ENCODE measurements at regions of chr17 and their contacts with region 1.

Region 1: DNA sequence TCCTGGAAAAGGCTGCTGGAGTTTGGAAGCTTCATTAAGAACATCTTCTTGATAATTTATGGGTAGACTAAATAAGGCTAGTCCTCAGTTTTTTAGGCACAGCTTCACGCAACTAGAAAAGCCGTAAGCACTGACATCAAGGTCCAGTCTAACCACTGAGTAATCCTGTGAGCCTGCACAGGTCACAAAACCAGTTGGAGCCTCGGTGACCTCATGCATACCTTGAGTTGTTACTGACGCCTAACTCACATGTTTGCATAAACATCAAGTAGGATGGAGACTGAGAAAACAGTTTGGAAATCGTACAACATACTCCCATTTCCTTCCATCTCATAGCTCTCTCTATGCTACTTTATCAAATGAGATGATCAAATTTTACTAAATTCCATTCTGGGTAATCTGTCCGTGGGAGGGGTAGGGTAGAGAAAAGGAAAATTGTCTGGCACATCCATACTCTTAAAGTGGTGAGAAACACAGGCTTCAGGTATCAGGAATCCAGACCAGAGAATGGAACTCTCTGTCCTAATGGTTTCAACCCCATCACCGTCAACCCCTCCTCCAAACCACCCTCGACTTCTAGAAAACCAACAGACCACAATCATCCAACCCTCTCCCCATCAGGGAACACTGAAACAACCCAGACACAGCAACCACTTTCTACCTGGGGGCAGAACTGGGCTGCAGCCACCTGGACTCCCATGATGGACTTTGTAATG is 64.0 kb upstream of the RCVRN start:
- DNase-seq: no peak
- ATAC-seq: no peak
- H3K4me3 ChIP-seq: no peak overlapping the region
- H3K27ac ChIP-seq: no peak overlapping the region
- H3K4me1 ChIP-seq: no peaks in the 10 kb centered on the region
- H3K27me3 ChIP-seq: peaks cover 1 to 25% of the 10 kb centered on the region in 2 experiments; a peak in 4 of 5 replicates
- CTCF ChIP-seq: no peak
- EP300 ChIP-seq: no peak
- POLR2A ChIP-seq: no peak
- RAD21 ChIP-seq: no peak

Region 2: GRCh38 chr17:10226930-10227685 is 258.0 kb after region 1 on chr17:
- CTCF ChIA-PET with region 1: no interaction called
- POLR2A ChIA-PET with region 1: no interaction called
- in situ Hi-C with region 1: loop called (anchors 5 kb)
- intact Hi-C with region 1: no loop called
- DNase-seq: peak; percentile 16
- ATAC-seq: peak; percentile 88
- H3K4me3 ChIP-seq: no peak overlapping the region
- H3K27ac ChIP-seq: no peak overlapping the region
- H3K4me1 ChIP-seq: no peaks in the 10 kb centered on the region
- H3K27me3 ChIP-seq: no peaks in the 10 kb centered on the region
- CTCF ChIP-seq: peak; percentile 73
- EP300 ChIP-seq: no peak
- POLR2A ChIP-seq: no peak
- RAD21 ChIP-seq: no peak

Measured in HepG2 (cell line).